Heart right ventricle (tissue), 16 donors: ENCODE measurements at regions of chr16 and their contacts with region 1.

Region 1: DNA sequence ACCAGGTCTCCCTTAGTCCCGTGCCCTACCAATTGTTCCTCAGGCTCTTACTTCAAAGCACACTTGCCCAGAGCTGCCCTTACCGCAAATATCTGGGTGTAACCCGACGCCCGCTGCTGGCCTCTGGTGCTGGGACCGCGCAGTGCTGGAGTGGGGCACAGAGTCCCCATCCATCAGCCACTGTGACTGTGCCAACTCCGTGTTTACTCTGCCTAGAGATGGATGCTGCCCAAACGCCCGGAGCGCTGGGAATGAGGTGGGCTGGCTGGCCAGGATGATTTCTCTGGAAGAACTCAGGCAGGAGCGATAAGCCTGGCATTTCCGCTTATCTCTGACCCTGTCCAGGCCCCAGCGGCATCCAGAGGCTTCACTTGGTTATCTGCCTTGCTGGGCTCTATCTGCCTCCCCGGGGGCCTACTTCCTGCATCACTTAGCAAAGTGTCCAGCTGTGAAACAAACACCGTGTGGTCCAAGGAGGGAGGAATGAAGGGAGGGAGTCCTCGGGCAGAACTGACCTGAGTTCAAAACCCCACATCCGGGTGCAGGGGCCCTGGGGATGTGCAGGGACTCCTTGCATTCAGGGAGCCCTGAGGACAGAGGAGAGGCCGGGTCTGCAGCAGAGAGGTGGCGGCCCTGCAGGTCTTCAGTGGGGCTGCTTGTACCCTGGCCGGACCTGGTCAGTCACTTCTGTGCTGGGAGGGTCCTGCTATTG is 9.4 kb upstream of the MYLK3 start:
- DNase-seq: peak; percentile 78 to 87
- ATAC-seq: peak; percentile 82 to 91 (median 88)
- H3K4me3 ChIP-seq: peak overlapping the region in 6 of 10 donors; percentile 3 to 37 (median 26)
- H3K27ac ChIP-seq: peak overlapping the region; percentile 53 to 91 (median 86)
- H3K4me1 ChIP-seq: peaks cover 0 to 62% (median 12%) of the 10 kb centered on the region in 9 donors
- H3K27me3 ChIP-seq: peaks cover 0 to 16% (median 0%) of the 10 kb centered on the region in 7 donors
- CTCF ChIP-seq: peak in 5 of 9 donors; percentile 11 to 54 (median 52)

Region 2: DNA sequence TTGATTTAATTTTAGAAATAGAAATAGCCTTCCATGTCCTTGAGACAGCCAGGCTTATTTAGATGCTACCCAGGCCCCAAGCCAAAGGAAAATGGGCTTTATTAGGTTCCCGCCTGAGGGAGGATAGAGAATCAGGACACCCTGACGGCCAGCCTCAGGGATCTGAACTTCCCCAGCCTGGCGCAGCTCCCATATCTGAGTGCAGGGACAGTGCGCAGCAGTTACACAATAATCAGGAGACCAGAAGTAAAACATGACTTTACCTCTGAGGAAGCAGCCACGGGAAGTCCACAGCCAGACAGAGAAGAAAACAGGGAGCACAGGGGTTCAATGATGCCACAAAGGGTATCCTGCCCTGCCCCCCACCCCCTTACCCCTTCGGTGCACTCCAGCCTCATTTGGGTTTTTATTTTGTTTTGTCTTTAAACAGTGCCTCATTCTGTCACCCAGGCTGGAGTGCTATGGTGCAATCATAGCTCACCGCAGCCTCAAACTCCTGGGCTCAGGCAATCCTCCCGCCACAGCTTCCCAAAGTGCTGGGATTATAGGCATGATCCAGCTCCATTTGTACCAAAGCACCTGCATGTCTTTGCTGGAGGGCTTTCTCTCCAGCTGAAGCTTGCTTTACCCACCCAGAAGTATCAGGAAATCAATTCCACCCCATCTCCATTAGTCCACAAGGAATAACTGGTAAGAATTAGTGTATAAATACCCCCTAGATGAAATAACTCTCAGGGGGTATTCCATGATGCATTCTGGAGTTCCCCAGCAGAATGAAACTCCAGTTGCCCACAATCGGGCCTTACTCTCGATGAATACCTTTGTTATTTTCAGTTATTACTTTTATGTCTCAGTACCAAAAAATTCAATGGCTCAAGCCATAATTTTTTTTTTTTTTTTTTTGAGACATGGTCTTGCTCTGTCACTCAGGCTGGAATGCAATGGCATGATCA is 46.1 kb before region 1 on chr16:
- intact Hi-C with region 1: no loop called
- DNase-seq: peak; percentile 66 to 69
- ATAC-seq: peak; percentile 57 to 85 (median 78)
- H3K4me3 ChIP-seq: no peak overlapping the region
- H3K27ac ChIP-seq: peak overlapping the region; percentile 12 to 80 (median 70)
- H3K4me1 ChIP-seq: peaks cover 13 to 62% (median 50%) of the 10 kb centered on the region in 9 donors
- H3K27me3 ChIP-seq: no peaks in the 10 kb centered on the region
- CTCF ChIP-seq: no peak

Region 3: DNA sequence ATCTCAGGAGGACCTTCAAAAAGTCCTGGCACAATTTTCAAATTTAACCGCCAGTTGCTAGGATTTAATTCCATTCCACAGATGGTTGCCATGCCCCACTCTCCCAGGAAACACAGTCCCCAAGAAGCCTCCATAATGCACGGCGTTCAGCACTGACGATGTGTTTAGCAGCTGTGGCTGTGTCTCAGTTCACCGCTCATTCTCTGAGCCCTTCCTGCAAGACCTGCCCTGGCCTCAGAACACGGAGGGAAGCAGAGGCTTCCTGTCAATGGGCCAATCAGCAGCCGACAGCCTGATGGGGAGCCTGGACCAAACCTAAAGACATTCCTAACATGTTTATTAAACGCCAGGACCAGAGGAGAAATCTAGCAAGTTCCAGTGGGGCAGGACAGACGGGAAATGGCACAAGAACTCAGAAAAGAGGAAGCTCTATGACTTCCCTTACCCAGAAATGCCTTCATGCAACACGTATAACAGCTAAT is 14.2 kb before region 1 on chr16:
- intact Hi-C with region 1: loop called in 3 of 10 experiments (anchors 1 to 2 kb)
- DNase-seq: peak; percentile 43 to 47
- ATAC-seq: peak; percentile 2 to 38 (median 15)
- H3K4me3 ChIP-seq: peak overlapping the region in 8 of 10 donors; percentile 16 to 70 (median 34)
- H3K27ac ChIP-seq: peak overlapping the region; percentile 82 to 99 (median 94)
- H3K4me1 ChIP-seq: peaks cover 0 to 45% (median 30%) of the 10 kb centered on the region in 9 donors
- H3K27me3 ChIP-seq: no peaks in the 10 kb centered on the region
- CTCF ChIP-seq: no peak

Region 4: GRCh38 chr16:46801428-46802049 is 44.0 kb after region 1 on chr16:
- intact Hi-C with region 1: loop called in 1 of 10 experiments (anchors 5 kb)
- DNase-seq: no peak
- ATAC-seq: peak in 3 of 8 donors; percentile 26 to 55 (median 53)
- H3K4me3 ChIP-seq: no peak overlapping the region
- H3K27ac ChIP-seq: no peak overlapping the region
- H3K4me1 ChIP-seq: no peaks in the 10 kb centered on the region
- H3K27me3 ChIP-seq: no peaks in the 10 kb centered on the region
- CTCF ChIP-seq: peak in 8 of 9 donors; percentile 14 to 66 (median 51)